Adrenal gland (tissue), 19 donors: ENCODE measurements at regions of chr22 and their contacts with region 1.

Region 1: DNA sequence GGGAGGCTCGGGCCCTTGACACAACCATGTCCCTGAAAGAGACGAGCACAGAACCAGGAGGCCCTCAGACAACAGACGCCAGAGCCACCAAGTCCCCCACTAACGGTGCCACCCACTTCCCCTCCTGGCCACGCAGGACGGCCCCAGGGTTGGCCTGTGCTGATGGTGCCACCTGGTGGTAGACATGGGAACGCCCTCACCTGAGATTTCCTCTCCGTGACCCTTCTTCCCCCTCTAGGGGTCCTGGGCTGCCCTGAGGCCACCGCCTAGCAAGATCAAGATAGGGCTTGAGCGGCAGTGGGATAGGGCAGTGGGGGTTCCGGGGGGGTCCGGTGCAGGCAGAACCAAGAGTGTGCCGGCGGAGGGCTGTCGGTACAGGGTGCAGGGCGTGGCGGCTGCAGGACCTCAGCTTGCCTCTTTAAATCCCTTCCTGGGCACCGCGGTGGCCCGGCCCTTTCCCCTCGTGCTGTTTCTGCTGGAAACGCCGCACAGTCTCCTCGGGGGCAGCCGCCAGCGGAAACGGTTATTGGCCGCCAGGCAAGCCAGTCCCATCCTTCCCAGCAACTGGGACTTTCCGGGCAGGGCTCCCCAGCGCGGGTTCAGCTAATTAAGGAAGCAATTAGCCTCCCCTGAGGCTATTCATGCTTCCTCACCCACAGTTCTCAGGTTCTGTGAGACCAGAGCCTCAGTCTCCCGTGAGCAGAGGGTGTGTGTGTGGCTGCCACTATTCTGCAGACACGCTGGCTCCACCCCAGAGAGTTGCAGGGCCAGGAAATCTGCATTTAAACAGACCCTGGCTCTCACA is 5.5 kb upstream of the NFAM1 start:
- DNase-seq: peak; percentile 63 to 87 (median 75)
- H3K4me3 ChIP-seq: peak overlapping the region in 2 of 4 donors; percentile 12 to 55
- H3K27ac ChIP-seq: peak overlapping the region in 2 of 5 donors; percentile 50 to 72
- H3K4me1 ChIP-seq: peaks cover 4 to 27% of the 10 kb centered on the region in 2 donors
- H3K27me3 ChIP-seq: no peaks in the 10 kb centered on the region
- CTCF ChIP-seq: peak; percentile 95 to 99 (median 97)
- POLR2A ChIP-seq: no peak

Region 2: DNA sequence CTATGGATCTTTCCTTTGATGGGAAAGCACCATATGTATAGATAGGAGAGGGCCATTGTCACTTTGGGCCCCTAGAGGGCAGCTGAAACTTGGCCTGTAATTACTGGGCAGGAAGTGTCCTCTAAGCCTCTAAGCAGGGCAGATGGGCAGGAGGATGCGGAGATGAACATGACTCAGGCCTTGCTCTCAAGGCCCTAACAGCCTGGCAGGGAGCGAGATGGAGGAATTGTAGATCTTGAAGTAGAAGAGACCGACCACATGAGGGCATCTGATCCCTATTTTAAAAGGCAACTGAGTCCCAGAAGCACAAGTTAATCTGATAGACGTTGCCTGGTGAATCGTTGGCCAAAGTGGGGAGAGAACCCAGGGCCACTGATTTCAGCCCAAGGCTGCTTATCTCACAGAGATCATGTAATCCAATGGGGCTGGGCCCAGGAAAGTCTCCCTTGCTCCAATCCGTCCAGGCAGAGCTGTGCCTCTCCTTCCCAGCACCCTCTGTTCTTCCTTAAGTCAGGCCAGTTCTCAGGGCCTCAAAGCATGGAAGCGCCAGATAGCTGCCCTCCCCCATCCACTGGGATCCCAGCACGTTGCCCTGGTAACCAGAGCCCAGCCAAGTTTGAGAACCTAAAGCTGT is 471.0 kb before region 1 on chr22:
- intact Hi-C with region 1: loop called (anchors 5 to 10 kb)
- DNase-seq: peak; percentile 75 to 93 (median 89)
- H3K4me3 ChIP-seq: no peak overlapping the region
- H3K27ac ChIP-seq: peak overlapping the region in 2 of 5 donors; percentile 64 to 74
- H3K4me1 ChIP-seq: no peaks in the 10 kb centered on the region
- H3K27me3 ChIP-seq: no peaks in the 10 kb centered on the region
- CTCF ChIP-seq: peak; percentile 34 to 72 (median 58)
- POLR2A ChIP-seq: no peak

Region 3: GRCh38 chr22:41976401-41976901 is 461.2 kb before region 1 on chr22:
- intact Hi-C with region 1: loop called in 1 of 2 experiments (anchors 10 kb)
- DNase-seq: peak in 3 of 7 donors; percentile 31 to 48 (median 33)
- H3K4me3 ChIP-seq: peak overlapping the region in 1 of 4 donors; percentile 68
- H3K27ac ChIP-seq: no peak overlapping the region
- H3K4me1 ChIP-seq: no peaks in the 10 kb centered on the region
- H3K27me3 ChIP-seq: peaks cover 23% of the 10 kb centered on the region
- CTCF ChIP-seq: no peak
- POLR2A ChIP-seq: no peak

Region 4: GRCh38 chr22:42090596-42091454 is 346.9 kb before region 1 on chr22 and contains the start of gene NDUFA6:
- intact Hi-C with region 1: loop called in 1 of 2 experiments (anchors 2 kb)
- DNase-seq: peak; percentile 98 to 100 (median 99)
- H3K4me3 ChIP-seq: peak within 1 kb of the TSS; percentile 34 to 94 (median 68)
- H3K27ac ChIP-seq: peak within 1 kb of the TSS; percentile 91 to 99 (median 97)
- H3K4me1 ChIP-seq: peaks cover 13 to 42% of the 10 kb centered on the region in 2 donors
- H3K27me3 ChIP-seq: no peaks in the 10 kb centered on the region
- CTCF ChIP-seq: peak; percentile 64 to 98 (median 94)
- POLR2A ChIP-seq: peak; percentile 82 to 98
- total RNA-seq, gene NDUFA6: 57.0 to 178 (median 75.2) TPM

Region 5: GRCh38 chr22:42169055-42169469 is 268.6 kb before region 1 on chr22:
- intact Hi-C with region 1: loop called (anchors 2 to 5 kb)
- DNase-seq: peak; percentile 64 to 90 (median 73)
- H3K4me3 ChIP-seq: no peak overlapping the region
- H3K27ac ChIP-seq: no peak overlapping the region
- H3K4me1 ChIP-seq: peaks cover 8 to 22% of the 10 kb centered on the region in 2 donors
- H3K27me3 ChIP-seq: no peaks in the 10 kb centered on the region
- CTCF ChIP-seq: peak; percentile 75 to 99 (median 92)
- POLR2A ChIP-seq: no peak

Region 6: DNA sequence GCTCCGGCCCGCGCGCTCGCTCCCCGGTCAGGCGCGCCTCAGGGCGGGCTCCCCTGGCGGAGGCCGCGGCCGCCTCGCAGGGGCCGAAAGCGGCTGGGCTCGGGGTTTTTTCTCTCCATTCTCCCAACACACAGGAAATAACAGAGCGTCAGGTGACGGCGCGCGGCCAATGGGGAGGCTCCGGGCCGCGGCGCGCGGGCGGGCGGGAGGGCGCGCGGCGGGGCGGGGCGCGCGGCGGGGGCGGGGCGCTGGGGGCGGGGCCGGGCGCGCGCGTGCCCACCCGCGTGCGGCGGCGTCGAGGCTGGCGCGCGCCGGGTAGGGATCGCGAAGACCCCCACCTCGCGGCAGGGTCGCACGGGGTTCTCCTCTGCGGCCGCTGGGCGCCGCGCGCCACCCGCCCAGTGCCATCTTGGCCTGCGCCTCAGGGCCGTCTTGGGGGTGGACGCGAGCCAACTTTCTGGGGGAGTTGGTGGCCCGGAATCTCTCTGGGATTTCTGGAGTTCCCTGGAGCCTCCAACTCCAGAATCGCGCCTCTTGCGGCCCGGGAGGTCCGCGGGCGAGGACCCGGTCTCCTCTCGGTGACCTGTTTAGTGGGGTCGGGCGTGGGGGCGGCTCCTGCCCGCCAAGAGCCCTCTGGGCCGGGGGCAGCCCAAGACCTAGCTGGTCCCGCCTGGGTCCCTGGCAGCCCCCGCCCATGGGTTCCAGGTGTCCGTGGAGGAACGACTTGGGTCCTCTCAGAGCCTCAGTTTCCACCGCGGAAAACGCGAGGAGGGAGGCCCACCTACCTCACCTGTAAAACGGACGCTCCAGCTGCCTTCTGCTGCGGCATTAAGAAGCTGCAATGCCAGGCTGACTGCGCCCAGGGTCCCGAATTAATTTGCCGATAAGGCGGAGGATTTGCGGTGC is 166.9 kb before region 1 on chr22 and contains the start of gene TCF20:
- intact Hi-C with region 1: loop called in 1 of 2 experiments (anchors 10 kb)
- DNase-seq: peak; percentile 69 to 82 (median 77)
- H3K4me3 ChIP-seq: peak within 1 kb of the TSS; percentile 36 to 99 (median 92)
- H3K27ac ChIP-seq: peak within 1 kb of the TSS; percentile 64 to 92 (median 78)
- H3K4me1 ChIP-seq: peaks cover 0 to 27% of the 10 kb centered on the region in 2 donors
- H3K27me3 ChIP-seq: no peaks in the 10 kb centered on the region
- CTCF ChIP-seq: no peak
- POLR2A ChIP-seq: no peak
- total RNA-seq, gene TCF20: 18.5 to 43.9 (median 28.3) TPM

Region 7: DNA sequence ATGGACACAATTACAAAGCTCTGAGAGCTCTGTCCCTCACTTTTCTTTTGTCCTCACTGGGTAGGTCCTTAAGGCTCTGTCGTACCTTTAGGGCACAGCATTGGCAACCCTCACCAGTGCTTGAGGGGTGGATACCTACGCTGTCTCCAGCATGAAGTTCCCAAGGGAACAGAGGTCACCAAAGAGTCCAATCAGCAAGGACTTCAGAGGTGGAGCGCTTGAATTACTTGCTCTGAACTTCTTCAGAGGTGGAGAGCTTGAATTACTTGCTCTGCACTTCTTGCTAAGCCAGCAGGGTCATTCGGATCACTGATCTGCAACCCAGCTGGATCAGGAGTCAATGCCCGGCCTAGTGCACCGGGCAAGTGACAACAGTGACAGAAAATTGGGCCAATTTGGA is 46.8 kb after region 1 on chr22:
- intact Hi-C with region 1: no loop called
- DNase-seq: no peak
- H3K4me3 ChIP-seq: no peak overlapping the region
- H3K27ac ChIP-seq: no peak overlapping the region
- H3K4me1 ChIP-seq: no peaks in the 10 kb centered on the region
- H3K27me3 ChIP-seq: no peaks in the 10 kb centered on the region
- CTCF ChIP-seq: no peak
- POLR2A ChIP-seq: no peak

Region 8: GRCh38 chr22:42544686-42545085 is 107.0 kb after region 1 on chr22:
- intact Hi-C with region 1: no loop called
- DNase-seq: peak in 2 of 7 donors; percentile 31 to 47
- H3K4me3 ChIP-seq: no peak overlapping the region
- H3K27ac ChIP-seq: no peak overlapping the region
- H3K4me1 ChIP-seq: no peaks in the 10 kb centered on the region
- H3K27me3 ChIP-seq: no peaks in the 10 kb centered on the region
- CTCF ChIP-seq: no peak
- POLR2A ChIP-seq: no peak